ENCODE measurements at regions of chr19 and their contacts with region 1.

Region 1: GRCh38 chr19:44603201-44603950 is 10.0 kb upstream of the IGSF23 start:
- DNase-seq: peak; percentile 84
- H3K4me3 ChIP-seq: no peak overlapping the region
- H3K27me3 ChIP-seq: no peaks in the 10 kb centered on the region
- CTCF ChIP-seq: no peak

Region 2: DNA sequence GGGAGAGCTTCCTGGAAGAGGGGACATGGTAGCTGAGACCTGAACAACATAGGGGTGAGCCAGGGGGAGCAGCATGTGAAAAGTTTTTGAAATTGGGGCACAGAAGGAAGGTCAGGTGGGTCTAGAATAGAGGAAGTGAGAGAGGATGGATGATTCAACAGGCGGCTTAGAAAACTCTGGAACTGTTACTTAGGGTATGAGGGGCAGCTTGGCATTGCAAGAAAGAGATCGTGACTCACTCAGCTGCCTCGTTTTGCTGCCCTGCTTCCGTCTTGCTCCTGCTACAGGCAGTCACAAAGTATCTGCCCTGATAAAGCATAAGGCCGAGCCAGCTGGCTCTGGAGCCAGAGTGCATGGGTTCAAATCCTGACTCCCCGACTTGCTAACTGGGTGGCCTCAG is 72.6 kb before region 1 on chr19:
- CTCF ChIA-PET with region 1: no interaction called
- POLR2A ChIA-PET with region 1: no interaction called
- DNase-seq: no peak
- H3K4me3 ChIP-seq: no peak overlapping the region
- H3K27me3 ChIP-seq: peaks cover 6% of the 10 kb centered on the region
- CTCF ChIP-seq: no peak

Region 3: DNA sequence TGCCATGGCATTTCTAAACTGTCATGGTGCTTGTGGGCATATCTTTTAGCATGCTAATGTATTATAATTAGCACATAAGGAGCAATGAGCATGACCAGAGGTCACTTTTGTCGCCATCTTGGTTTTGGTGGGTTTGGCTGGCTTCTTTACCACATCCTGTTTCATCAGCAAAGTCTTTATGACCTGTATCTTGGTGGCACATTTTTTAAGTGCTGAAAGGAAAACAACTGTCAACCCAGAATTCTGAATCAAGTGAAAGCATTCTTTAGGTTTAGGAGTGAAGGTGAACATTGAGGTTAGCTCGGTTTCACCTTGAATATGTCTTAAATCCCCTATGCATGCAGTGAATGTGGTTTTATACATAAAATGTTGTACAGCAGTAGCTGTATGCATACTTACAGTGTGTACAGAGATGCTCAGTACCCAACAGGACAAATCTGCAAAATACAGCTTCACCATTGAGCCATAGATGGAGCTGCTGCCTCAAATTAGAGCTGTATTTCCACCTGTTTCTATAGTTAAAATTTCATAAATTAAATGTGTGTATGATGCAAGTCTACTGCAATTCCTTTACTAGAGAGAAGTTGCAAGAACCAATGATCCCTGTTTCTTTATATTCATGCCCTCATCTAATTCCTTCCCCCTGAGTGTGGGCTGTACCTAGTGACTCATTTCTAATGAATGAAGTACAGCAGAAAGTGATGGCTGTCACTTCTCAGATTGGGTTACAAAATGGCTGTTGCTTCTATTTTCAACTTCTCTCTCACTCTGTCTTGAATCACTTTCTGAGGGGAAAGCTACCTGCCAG is 15.2 kb before region 1 on chr19:
- CTCF ChIA-PET with region 1: interaction called, 15 read pairs
- POLR2A ChIA-PET with region 1: no interaction called
- DNase-seq: peak; percentile 75
- H3K4me3 ChIP-seq: no peak overlapping the region
- H3K27me3 ChIP-seq: no peaks in the 10 kb centered on the region
- CTCF ChIP-seq: peak; percentile 41

Region 4: DNA sequence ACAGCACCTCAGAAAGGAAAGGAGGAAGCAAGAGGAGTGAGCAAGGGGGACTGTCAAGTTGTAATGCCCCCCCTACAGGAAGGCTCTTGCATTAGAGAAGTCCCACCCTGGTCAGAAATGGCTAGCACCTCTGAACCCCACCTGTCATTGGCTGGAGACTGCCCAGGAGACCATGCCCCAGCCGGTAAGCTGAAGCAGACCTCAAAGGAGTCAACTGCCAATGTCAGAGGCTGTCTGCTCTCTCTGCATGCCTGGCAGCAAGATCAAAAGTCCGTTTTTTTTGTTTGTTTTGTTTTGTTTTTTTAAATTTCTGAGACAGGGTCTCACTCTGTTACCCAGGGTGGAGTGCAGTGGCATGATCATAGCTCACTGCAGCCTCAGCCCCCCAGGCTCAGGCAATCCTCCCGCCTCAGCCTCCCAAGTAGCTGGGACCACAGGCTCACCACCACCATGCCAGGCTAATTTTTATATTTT is 137.0 kb after region 1 on chr19:
- CTCF ChIA-PET with region 1: no interaction called
- POLR2A ChIA-PET with region 1: no interaction called
- DNase-seq: no peak
- H3K4me3 ChIP-seq: no peak overlapping the region
- H3K27me3 ChIP-seq: no peaks in the 10 kb centered on the region
- CTCF ChIP-seq: 0 out of 2 replicates have a peak, but pooled peaks have one; percentile 4

Measured in BJ (cell line).